Activated CD4-positive, alpha-beta T cell treated with anti-CD3 and anti-CD28 coated beads, Interleukin-2, amount 10 ng/mL, durations not matched to agents 7 days and 5 days (primary cell): ENCODE measurements at regions of chr4 and their contacts with region 1.

Region 1: DNA sequence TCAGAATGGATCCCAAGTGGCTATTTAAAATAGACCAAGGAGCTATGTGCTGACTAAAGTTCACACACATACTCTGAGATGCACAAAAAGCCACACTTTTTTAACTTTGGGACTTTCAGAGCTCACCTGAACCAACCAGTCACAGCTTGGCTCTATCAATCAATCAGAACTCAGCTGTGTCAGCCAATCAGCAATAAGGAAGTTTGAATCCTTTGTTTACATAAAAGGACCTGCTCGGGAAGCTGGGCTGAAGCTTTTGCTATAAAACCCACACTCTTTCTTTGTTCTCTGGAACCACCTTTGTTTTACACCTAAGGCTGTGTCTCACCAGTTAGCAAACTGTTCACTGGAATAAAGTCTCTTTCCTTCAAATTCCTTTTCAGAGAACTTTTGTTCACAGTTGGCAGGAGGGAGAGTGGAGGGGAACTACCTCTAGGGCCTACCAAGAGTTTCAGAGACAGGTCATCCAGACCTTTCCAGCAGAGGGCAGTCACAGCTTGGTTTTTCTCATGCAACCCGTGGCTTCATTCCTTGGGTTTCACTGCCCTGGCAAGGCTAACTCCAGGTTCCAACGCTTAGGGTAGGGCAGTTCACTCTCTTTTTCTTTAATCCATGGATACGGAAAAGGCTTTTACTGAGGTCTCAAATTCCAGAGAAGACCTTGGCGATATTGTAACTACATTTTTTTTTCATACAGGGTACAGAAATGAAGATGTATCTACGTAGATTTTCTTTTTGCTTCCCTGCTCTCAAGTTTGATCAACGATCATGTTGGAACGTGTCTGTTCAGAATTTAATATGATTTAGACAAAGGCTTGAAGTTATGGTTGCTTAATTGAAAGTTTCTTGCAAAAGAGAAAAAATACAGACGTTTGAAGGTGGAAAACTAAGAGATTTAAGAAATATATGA is 80.7 kb downstream of the GPRIN3 start:
- DNase-seq: peak; percentile 86
- H3K4me3 Mint-ChIP-seq: no peak overlapping the region
- H3K27ac Mint-ChIP-seq: peak overlapping the region; percentile 38
- H3K4me1 Mint-ChIP-seq: peaks cover 8% of the 10 kb centered on the region
- H3K27me3 Mint-ChIP-seq: no peaks in the 10 kb centered on the region

Region 2: DNA sequence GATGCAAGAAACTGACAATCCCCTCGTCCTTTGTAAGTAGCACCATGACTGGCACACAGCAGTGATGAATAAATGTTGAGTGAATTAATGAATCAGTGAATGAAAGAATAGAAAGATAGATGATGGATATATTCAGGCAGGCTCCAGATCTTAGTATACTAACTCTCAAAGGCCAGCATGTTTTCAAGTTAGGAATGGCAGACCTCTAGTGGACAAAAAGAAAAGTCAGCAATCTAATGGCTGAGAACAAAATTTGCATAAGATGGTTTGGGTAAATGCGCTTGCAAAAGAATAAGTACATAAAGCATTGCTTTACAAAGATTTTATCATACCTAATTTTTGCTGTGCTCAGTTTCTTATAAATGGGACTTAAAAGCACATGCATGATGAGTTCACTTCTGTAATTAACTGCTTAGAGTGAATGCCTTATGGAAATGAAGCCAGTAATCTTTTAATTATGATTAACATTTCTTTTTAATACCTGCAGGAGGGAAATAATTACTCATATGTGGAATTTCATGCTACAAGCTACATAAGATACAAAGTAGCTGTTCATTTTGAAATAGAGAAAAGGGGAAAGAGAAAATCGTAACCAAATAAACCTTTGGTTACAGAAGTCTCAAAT is 207.6 kb after region 1 on chr4:
- CTCF ChIA-PET with region 1: interaction called, 15 read pairs
- POLR2A ChIA-PET with region 1: no interaction called
- DNase-seq: peak; percentile 33
- H3K4me3 Mint-ChIP-seq: no peak overlapping the region
- H3K27ac Mint-ChIP-seq: no peak overlapping the region
- H3K4me1 Mint-ChIP-seq: peaks cover 19% of the 10 kb centered on the region
- H3K27me3 Mint-ChIP-seq: no peaks in the 10 kb centered on the region